ENCODE measurements at regions of chr12 and their contacts with region 1.

Region 1: DNA sequence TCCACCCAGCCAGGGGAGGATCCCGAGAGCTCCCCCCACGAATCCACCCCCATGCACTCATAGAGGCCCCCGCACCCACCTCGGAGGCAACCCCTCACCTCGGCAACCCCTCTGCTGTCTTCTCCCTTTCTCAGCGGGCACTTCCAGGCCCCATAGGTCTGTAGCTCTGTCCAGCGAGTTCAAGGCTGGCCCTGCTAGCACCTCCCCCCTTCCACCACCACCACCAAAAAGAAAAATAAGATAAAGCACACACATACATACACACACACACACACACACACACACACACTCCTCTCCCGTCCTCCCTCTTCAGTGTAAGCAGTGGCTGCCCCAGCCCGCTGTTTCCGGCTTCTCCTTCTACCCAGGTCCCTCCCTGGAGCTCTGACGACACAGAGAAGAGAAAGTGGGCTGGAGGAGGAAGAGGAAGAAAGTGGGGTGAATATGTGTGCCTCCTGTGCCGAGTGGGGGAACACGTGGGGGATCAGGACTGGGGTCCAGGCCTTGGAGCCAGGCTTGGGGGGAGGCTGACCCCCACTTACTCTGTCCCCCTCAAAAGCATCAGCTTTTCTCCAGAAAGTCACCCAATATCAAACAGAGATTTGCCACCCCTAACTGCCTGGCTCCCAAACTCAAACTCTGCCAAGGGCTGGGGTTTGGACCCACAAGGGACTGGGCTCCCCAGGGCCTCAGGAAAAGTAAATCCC is at the start of gene STAT6:
- DNase-seq: peak; percentile 79
- H3K4me3 ChIP-seq: peak within 1 kb of the TSS; percentile 31 to 72 (median 65)
- H3K27ac ChIP-seq: peak within 1 kb of the TSS; percentile 79
- H3K4me1 ChIP-seq: peaks cover 14% of the 10 kb centered on the region
- H3K27me3 ChIP-seq: peaks cover 0 to 2% of the 10 kb centered on the region in 2 experiments
- CTCF ChIP-seq: no peak
- POLR2A ChIP-seq: peak; percentile 31
- total RNA-seq, gene STAT6: 101 and 136 TPM in 2 replicates

Region 2: DNA sequence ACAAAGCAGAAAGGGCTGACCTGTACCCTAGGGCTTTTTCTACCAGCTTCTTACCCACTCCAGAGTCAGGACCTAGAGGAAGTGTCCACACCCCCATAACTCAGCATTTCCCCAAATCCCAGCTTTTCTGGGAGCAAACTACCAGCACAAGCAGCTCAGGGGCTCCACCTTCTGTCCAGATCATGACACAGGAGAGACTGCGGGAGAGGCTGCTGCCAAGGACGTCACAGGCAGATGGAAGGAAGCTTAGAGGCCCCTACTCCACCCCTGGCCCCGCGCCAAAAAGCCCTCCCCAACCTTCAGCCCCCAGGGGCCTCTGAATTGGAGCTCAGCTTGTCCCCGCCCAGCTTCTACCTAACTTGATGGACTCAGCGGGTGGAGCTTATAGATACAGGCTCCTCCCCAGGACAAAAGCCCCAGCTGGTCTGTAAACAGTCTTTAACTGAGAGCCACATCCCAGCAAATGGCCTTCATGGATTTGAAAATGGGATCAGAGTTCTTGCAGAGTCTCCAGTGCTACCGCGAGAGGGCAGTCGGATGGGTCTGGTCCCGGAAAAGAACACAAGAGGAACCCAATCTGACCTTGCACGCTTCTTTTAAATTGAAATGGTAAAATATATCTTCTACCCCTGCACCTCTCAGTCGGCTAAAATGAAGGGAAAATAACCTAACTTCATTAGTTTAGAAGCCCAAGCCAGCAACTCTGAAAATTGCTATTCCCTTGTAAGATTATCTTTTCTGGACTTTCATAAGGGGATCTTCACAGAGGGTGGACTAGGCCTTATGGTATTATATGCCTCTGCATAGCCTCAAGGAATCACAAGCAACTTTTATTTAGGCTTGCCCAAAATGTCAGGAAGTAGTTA is 474.3 kb before region 1 on chr12:
- CTCF ChIA-PET with region 1: interaction called, 4 read pairs
- POLR2A ChIA-PET with region 1: no interaction called
- dilution Hi-C with region 1: no loop called
- intact Hi-C with region 1: loop called (anchors 5 kb)
- DNase-seq: peak; percentile 99
- H3K4me3 ChIP-seq: peak overlapping the region in 2 of 3 experiments; percentile 21 to 76
- H3K27ac ChIP-seq: peak overlapping the region; percentile 48
- H3K4me1 ChIP-seq: peaks cover 34% of the 10 kb centered on the region
- H3K27me3 ChIP-seq: no peaks in the 10 kb centered on the region
- CTCF ChIP-seq: peak; percentile 65 to 77
- POLR2A ChIP-seq: peak; percentile 78

Region 3: GRCh38 chr12:57063991-57064685 is 47.0 kb before region 1 on chr12:
- CTCF ChIA-PET with region 1: interaction called, 449 read pairs
- POLR2A ChIA-PET with region 1: interaction called, 7 read pairs
- dilution Hi-C with region 1: no loop called
- intact Hi-C with region 1: loop called (anchors 1 kb)
- DNase-seq: no peak
- H3K4me3 ChIP-seq: no peak overlapping the region
- H3K27ac ChIP-seq: no peak overlapping the region
- H3K4me1 ChIP-seq: no peaks in the 10 kb centered on the region
- H3K27me3 ChIP-seq: no peaks in the 10 kb centered on the region
- CTCF ChIP-seq: no peak
- POLR2A ChIP-seq: no peak

Region 4: GRCh38 chr12:57078519-57079404 is 32.4 kb before region 1 on chr12 and contains the start of gene NEMP1:
- CTCF ChIA-PET with region 1: interaction called, 71 read pairs
- POLR2A ChIA-PET with region 1: interaction called, 3 read pairs
- dilution Hi-C with region 1: no loop called
- intact Hi-C with region 1: no loop called
- DNase-seq: peak; percentile 100
- H3K4me3 ChIP-seq: peak within 1 kb of the TSS; percentile 54 to 86 (median 65)
- H3K27ac ChIP-seq: peak within 1 kb of the TSS; percentile 53
- H3K4me1 ChIP-seq: peaks cover 10% of the 10 kb centered on the region
- H3K27me3 ChIP-seq: no peaks in the 10 kb centered on the region
- CTCF ChIP-seq: no peak
- POLR2A ChIP-seq: no peak
- total RNA-seq, gene NEMP1: 21.5 and 27.7 TPM in 2 replicates

Region 5: DNA sequence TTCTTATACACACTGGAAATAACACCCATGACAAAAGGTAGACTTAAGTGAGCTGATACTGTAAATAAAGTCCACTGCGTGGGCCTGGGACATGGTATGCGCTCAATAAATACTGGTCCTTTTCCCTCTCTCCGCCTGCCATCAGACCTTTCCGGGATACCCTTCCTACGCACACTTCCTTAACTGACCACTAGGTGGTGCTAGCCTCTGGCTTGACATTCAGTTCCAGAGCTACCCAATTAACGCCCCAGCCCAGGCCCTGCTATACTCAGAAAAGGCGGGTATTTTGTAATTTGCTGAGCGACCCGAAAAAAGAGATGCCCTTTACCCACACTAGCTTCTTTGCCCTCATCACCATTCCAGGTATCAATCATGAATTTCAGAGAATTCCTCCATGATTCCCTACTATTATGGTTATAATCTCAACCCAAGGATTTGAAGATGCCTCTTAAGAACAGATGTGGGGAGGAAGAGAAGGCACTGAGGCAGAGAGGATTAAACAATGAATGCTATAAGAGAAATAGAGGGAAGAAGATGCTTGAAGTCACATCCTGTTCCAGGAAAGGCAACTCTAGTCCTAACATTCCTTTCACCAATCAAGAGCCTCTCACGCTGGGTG is 13.2 kb after region 1 on chr12:
- CTCF ChIA-PET with region 1: interaction called, 61 read pairs
- POLR2A ChIA-PET with region 1: no interaction called
- dilution Hi-C with region 1: no loop called
- intact Hi-C with region 1: no loop called
- DNase-seq: peak; percentile 65
- H3K4me3 ChIP-seq: no peak overlapping the region
- H3K27ac ChIP-seq: no peak overlapping the region
- H3K4me1 ChIP-seq: peaks cover 4% of the 10 kb centered on the region
- H3K27me3 ChIP-seq: peaks cover 17 to 32% of the 10 kb centered on the region in 2 experiments
- CTCF ChIP-seq: peak; percentile 90 to 93
- POLR2A ChIP-seq: no peak

Region 6: DNA sequence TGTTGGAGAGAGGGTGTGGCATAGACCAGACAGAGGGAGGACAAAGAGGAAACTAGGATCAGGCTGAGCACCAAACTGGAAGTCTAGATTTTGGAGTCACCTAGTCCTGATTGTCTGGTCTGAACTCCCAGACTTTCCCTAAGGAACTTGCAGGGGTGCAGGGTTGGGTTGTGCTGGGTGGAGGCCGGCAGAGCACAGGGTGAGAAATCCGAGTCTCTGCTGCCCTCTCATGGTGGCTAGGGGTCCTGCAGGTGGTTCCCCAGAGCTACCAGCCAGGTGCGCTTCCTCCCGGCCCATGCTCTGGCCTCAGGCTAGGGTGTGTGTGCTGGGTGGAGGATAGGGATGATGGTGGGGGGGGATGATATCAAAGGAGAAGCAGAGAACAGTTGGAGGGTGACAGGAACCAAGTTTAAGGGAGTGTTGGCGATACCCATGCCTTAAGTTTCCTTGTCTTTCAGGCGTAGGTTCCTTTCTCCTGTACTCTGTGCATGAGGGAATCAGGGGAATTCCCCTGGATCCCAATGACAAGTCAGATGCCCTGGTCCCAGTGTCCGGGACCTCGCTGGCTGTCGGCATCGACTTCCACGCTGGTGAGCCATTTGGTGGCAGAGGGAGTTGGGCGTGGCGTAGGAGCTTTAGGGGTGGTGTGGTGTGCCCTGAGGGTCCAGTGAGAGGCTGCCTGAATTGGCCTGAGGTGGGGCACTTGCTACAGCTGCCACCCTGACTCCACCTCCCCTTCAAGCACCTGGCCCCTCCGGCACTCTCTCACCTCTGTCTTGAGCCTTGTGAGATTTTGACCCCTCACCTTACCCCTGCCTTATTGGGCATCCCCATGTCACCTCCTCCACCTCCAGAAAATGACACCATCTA is 72.0 kb after region 1 on chr12:
- CTCF ChIA-PET with region 1: interaction called, 34 read pairs
- POLR2A ChIA-PET with region 1: no interaction called
- dilution Hi-C with region 1: no loop called
- intact Hi-C with region 1: no loop called
- DNase-seq: peak; percentile 50
- H3K4me3 ChIP-seq: no peak overlapping the region
- H3K27ac ChIP-seq: no peak overlapping the region
- H3K4me1 ChIP-seq: no peaks in the 10 kb centered on the region
- H3K27me3 ChIP-seq: peaks cover 2 to 5% of the 10 kb centered on the region in 2 experiments
- CTCF ChIP-seq: peak; percentile 92 to 94
- POLR2A ChIP-seq: no peak

Measured in endothelial cell of umbilical vein (primary cell).